IMR-90 (cell line): ENCODE measurements at regions of chr7 and their contacts with region 1.

Region 1: GRCh38 chr7:158829342-158830210 is at the start of gene ESYT2:
- DNase-seq: peak; percentile 96
- ATAC-seq: peak; percentile 87
- H3K4me3 ChIP-seq: peak within 1 kb of the TSS; percentile 86
- H3K27ac ChIP-seq: peak within 1 kb of the TSS; percentile 71
- H3K4me1 ChIP-seq: peaks cover 3% of the 10 kb centered on the region; the same call in 1 of the 2 replicates
- H3K27me3 ChIP-seq: no peaks in the 10 kb centered on the region
- CTCF ChIP-seq: peak; percentile 35
- POLR2A ChIP-seq: peak; percentile 94
- RAD21 ChIP-seq: peak; percentile 35
- total RNA-seq, gene ESYT2: 64.4 and 69.9 TPM in 2 replicates

Region 2: DNA sequence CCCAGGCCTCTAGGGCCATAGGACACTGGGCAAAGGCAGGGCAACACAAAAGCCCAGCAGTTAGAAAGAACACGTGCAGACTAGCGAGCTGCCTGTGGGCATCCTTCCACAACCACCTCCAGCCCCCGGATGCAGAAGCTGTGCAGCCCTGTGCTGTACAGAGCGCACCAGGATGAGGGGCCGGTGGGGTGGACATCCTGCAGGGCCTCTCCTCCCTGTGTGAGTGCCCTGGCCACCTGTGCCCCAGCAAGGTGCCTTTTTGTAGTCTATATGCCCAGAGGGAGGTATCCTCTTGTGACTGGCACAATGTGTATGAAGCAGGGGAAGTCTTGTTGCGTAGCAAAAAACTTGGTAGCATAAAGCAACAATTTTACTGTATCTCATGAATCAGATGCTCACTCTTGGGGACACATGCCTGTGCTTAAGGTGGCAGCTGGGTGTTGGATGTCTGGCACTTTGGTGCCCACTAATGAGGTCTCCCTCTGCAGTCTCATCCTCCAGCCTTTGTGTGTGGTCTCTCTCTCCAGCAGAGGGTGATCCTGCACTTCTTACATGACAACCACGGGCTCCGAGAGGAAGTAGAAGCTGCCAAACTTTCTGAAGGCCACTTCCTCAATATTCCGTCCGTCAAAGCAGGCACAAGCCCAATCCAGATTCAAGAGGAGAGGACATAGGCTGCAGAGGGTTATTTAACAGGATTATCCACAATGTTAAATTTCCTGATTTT is 133.7 kb before region 1 on chr7:
- CTCF ChIA-PET with region 1: interaction called, 4 read pairs
- POLR2A ChIA-PET with region 1: interaction called, 3 read pairs
- dilution Hi-C with region 1: no loop called
- in situ Hi-C with region 1: no loop called
- intact Hi-C with region 1: loop called (anchors 2 kb)
- DNase-seq: peak; percentile 77
- ATAC-seq: peak; percentile 92
- H3K4me3 ChIP-seq: no peak overlapping the region
- H3K27ac ChIP-seq: no peak overlapping the region
- H3K4me1 ChIP-seq: peaks cover 4% of the 10 kb centered on the region; the same call in 1 of the 2 replicates
- H3K27me3 ChIP-seq: no peaks in the 10 kb centered on the region
- CTCF ChIP-seq: peak; percentile 76
- POLR2A ChIP-seq: 0 out of 2 replicates have a peak, but pooled peaks have one; percentile 28
- RAD21 ChIP-seq: peak; percentile 85

Region 3: DNA sequence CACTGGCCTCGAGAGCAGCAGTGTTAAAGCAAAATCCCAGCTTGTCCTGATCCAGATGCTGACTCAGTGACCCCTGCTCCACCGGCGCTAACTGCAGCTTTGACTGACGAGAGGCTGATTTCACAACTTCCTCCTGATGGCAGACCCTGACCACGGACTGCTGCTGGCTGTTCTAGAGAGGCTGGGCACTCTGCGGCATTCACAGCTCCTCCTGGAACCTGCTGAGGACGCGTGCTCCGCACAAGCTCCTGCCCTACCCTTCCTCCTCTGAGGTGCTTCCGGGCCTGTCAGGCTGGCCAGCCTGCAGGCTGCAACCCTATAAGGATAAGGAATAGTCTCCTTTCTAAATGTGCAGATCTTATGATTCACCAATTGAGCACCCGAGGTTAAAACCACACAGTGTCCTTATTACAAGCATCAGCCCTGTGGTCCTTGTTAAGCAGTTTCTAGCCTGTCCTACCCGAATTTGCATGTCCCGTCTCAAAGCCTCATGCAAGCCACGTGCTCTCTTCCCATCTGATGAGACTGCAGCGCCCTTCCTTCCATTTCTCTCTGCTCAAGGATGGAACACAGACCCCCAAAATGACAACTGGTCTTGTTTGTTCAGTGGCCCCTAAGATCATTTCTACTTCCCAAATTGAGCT is 89.4 kb before region 1 on chr7:
- CTCF ChIA-PET with region 1: no interaction called
- POLR2A ChIA-PET with region 1: no interaction called
- dilution Hi-C with region 1: no loop called
- in situ Hi-C with region 1: no loop called
- intact Hi-C with region 1: loop called (anchors 1 kb)
- DNase-seq: peak; percentile 91
- ATAC-seq: peak; percentile 83
- H3K4me3 ChIP-seq: no peak overlapping the region
- H3K27ac ChIP-seq: peak overlapping the region; percentile 76
- H3K4me1 ChIP-seq: peaks cover 18% of the 10 kb centered on the region
- H3K27me3 ChIP-seq: no peaks in the 10 kb centered on the region
- CTCF ChIP-seq: no peak
- POLR2A ChIP-seq: no peak
- RAD21 ChIP-seq: peak; percentile 31

Region 4: GRCh38 chr7:158802473-158803202 is 26.9 kb before region 1 on chr7:
- CTCF ChIA-PET with region 1: no interaction called
- POLR2A ChIA-PET with region 1: no interaction called
- dilution Hi-C with region 1: no loop called
- in situ Hi-C with region 1: no loop called
- intact Hi-C with region 1: loop called (anchors 1 kb)
- DNase-seq: peak; percentile 56
- ATAC-seq: peak; percentile 82
- H3K4me3 ChIP-seq: no peak overlapping the region
- H3K27ac ChIP-seq: peak overlapping the region; percentile 81
- H3K4me1 ChIP-seq: peaks cover 7% of the 10 kb centered on the region
- H3K27me3 ChIP-seq: no peaks in the 10 kb centered on the region
- CTCF ChIP-seq: no peak
- POLR2A ChIP-seq: no peak
- RAD21 ChIP-seq: no peak

Region 5: GRCh38 chr7:158856883-158857668 is 27.5 kb after region 1 on chr7:
- CTCF ChIA-PET with region 1: no interaction called
- POLR2A ChIA-PET with region 1: no interaction called
- dilution Hi-C with region 1: no loop called
- in situ Hi-C with region 1: no loop called
- intact Hi-C with region 1: loop called (anchors 1 kb)
- DNase-seq: no peak
- ATAC-seq: peak; percentile 40
- H3K4me3 ChIP-seq: peak overlapping the region; percentile 69
- H3K27ac ChIP-seq: peak overlapping the region; percentile 47
- H3K4me1 ChIP-seq: 0 out of 2 replicates have a peak, but pooled peaks cover 2% of the 10 kb centered on the region
- H3K27me3 ChIP-seq: no peaks in the 10 kb centered on the region
- CTCF ChIP-seq: no peak
- POLR2A ChIP-seq: no peak
- RAD21 ChIP-seq: no peak